ENCODE measurements at regions of chr9 and their contacts with region 1.

Region 1: DNA sequence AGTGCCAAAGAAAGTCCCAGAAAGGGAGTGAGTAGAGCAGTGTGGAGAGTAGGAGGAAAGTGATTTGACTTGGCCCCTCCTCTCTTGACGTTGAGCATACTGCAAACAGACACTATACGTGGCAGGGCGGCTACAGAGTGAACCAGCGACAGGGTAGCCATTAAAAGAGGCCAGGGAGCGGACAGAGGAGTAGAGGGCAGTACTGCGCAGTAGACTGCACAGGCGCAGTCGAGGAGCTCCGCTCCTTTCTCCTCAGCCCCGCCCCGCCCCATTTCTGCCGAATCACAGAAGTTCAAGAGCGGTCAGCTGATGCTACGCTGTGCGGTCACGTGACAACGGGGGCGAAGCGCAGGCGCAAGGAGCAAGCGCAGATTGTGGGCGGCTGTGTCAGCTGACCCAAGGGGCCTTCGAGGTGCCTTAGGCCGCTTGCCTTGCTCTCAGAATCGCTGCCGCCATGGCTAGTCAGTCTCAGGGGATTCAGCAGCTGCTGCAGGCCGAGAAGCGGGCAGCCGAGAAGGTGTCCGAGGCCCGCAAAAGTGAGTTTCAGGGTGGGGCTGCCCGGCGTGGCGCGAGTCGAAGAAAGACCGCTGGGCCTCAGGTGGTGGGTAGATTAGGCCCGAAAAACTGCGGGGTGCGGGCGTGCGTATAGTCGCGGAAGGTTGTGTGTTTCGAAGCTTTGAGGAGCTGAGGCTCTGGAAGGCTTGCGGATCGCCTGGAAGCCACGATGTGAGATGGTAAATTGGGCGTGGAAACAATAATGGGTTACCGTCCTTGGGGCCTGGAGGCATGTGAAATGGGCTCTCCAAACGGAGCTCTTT is at the start of gene ATP6V1G1:
- DNase-seq: peak; percentile 99
- H3K4me3 Mint-ChIP-seq: peak within 1 kb of the TSS; percentile 94
- H3K27ac Mint-ChIP-seq: peak within 1 kb of the TSS; percentile 92
- H3K4me1 Mint-ChIP-seq: peaks cover 49% of the 10 kb centered on the region
- H3K27me3 Mint-ChIP-seq: no peaks in the 10 kb centered on the region
- total RNA-seq, gene ATP6V1G1: 92.4 to 94.2 TPM

Region 2: DNA sequence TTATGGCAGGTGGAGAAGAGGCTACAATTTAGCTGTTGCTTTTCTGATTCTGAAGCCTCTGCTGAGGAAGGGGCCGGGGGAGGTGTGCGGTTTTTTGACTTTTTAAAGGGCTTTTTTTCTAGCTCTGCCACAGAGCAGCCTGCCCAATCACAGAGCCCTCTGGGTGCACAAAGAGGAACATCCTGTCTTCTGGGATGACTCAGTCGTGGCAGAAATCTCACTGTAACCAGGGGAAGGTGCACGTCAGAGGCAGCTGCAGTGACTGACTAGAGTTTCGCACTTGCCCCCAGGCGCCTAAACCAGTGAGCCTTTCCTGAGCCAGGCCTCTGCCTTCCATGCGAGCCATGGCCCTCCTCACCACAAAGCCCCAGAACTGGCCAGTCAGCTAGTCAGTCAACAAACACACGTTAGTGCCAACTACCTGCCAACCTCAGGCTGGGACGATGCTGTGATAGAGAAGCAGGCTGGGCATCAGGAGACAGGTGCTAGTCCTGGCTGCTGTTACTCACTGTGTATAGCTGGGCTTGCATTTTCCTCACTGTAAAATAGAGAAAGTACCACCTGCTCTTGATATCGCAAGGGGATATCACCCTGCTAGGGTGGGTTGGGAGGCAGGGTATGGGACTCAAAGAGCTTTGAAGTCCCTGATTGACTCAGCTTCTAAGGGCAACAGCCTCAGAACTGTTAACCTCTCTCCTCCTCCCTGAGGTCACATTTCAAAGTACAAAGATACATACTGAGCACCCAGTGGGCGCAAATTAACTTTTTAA is 202.0 kb before region 1 on chr9:
- CTCF ChIA-PET with region 1: interaction called, 8 read pairs
- POLR2A ChIA-PET with region 1: interaction called, 29 read pairs
- DNase-seq: peak; percentile 93
- H3K4me3 Mint-ChIP-seq: peak overlapping the region; percentile 100
- H3K27ac Mint-ChIP-seq: peak overlapping the region; percentile 98
- H3K4me1 Mint-ChIP-seq: peaks cover 58% of the 10 kb centered on the region
- H3K27me3 Mint-ChIP-seq: no peaks in the 10 kb centered on the region

Region 3: GRCh38 chr9:114487607-114488300 is 99.8 kb before region 1 on chr9:
- CTCF ChIA-PET with region 1: interaction called, 13 read pairs
- POLR2A ChIA-PET with region 1: interaction called, 14 read pairs
- DNase-seq: peak; percentile 63
- H3K4me3 Mint-ChIP-seq: no peak overlapping the region
- H3K27ac Mint-ChIP-seq: no peak overlapping the region
- H3K4me1 Mint-ChIP-seq: peaks cover 34% of the 10 kb centered on the region
- H3K27me3 Mint-ChIP-seq: peaks cover 12% of the 10 kb centered on the region

Region 4: GRCh38 chr9:114603248-114603647 is 15.7 kb after region 1 on chr9:
- CTCF ChIA-PET with region 1: interaction called, 17 read pairs
- POLR2A ChIA-PET with region 1: interaction called, 8 read pairs
- DNase-seq: no peak
- H3K4me3 Mint-ChIP-seq: no peak overlapping the region
- H3K27ac Mint-ChIP-seq: no peak overlapping the region
- H3K4me1 Mint-ChIP-seq: peaks cover 2% of the 10 kb centered on the region
- H3K27me3 Mint-ChIP-seq: no peaks in the 10 kb centered on the region

Region 5: GRCh38 chr9:114616653-114617520 is 29.3 kb after region 1 on chr9:
- CTCF ChIA-PET with region 1: interaction called, 32 read pairs
- POLR2A ChIA-PET with region 1: interaction called, 109 read pairs
- DNase-seq: no peak
- H3K4me3 Mint-ChIP-seq: no peak overlapping the region
- H3K27ac Mint-ChIP-seq: peak overlapping the region; percentile 73
- H3K4me1 Mint-ChIP-seq: peaks cover 45% of the 10 kb centered on the region
- H3K27me3 Mint-ChIP-seq: no peaks in the 10 kb centered on the region

Region 6: GRCh38 chr9:114674798-114675540 is 87.4 kb after region 1 on chr9:
- CTCF ChIA-PET with region 1: no interaction called
- POLR2A ChIA-PET with region 1: no interaction called
- DNase-seq: no peak
- H3K4me3 Mint-ChIP-seq: no peak overlapping the region
- H3K27ac Mint-ChIP-seq: no peak overlapping the region
- H3K4me1 Mint-ChIP-seq: peaks cover 16% of the 10 kb centered on the region
- H3K27me3 Mint-ChIP-seq: peaks cover 18% of the 10 kb centered on the region

Measured in activated CD4-positive, alpha-beta memory T cell treated with anti-CD3 and anti-CD28 coated beads, Interleukin-2, amount 10 ng/mL, durations not matched to agents 7 days and 5 days (primary cell).